ENCODE measurements at regions of chr7 and their contacts with region 1.

Region 1: DNA sequence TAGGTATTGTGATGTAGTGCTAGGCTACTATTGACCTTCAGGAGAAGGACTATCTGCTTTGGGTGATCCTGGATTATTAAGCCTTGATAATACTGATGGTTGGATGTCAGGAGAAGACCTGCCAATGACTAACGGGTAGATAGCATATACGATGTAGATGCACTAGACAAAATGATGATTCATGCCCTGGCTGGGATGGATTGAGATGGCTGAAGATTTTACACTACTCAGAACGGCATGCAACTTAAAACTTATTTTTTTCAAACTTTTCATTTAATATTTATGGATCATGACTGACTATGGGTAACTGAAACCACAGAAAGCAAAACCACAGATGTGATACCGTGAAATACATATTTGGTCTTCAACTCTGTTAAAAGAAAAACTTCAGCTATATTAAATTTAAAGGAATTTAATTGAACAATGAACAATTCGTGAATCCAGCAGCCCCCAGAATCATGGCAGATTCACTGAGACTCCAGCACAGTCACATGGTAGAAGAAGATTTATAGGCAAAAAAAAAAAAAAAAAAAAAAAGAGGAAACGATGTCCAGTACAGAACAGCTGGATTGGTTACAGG is 124.6 kb upstream of the CDK13 start:
- DNase-seq: no peak
- ATAC-seq: no peak
- H3K4me3 ChIP-seq: no peak overlapping the region
- H3K27ac ChIP-seq: no peak overlapping the region
- H3K4me1 ChIP-seq: no peaks in the 10 kb centered on the region
- H3K27me3 ChIP-seq: peaks cover 0 to 10% (median 0%) of the 10 kb centered on the region in 9 donors
- CTCF ChIP-seq: no peak
- POLR2A ChIP-seq: no peak

Region 2: DNA sequence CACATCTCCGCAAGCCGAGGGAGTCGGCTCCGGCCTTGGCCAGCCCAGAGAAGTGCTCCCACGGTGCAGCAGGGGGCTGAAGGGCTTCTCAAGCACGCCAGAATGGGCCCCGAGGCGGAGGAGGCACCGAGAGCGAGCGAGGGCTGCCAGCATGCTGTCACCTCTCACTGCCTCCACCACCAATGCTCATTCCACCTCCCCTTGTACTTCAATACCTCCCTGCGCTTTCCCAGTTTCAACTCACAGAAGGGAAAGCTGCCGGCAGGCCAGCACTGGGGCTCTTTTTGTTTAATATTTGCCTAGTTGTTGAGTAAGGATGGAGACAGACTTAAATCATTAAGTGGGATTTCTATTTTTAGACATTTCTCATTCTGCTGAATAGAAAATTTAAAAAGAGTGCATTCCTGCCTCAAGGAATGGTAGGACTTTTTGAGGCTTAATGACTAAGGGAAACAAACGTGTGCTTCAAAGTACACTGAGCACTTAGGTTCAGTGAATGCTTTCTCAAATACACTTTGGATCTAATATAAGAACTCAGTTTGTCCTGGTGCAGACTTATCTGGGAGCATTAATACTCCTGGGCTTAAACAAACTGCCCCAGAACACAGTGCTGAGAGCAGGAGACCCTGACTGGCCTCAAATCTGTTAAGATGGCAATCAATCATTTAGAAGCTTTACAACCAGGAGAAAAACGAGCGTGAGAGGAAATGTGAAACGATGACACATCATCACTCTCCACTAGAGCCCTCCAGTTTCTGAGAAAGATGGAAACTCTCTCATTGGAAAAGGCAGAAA is 71.0 kb before region 1 on chr7:
- intact Hi-C with region 1: loop called in 1 of 10 experiments (anchors 10 kb)
- DNase-seq: no peak
- ATAC-seq: no peak
- H3K4me3 ChIP-seq: no peak overlapping the region
- H3K27ac ChIP-seq: no peak overlapping the region
- H3K4me1 ChIP-seq: peaks cover 0 to 11% (median 1%) of the 10 kb centered on the region in 12 donors
- H3K27me3 ChIP-seq: no peaks in the 10 kb centered on the region
- CTCF ChIP-seq: no peak
- POLR2A ChIP-seq: no peak

Measured in heart left ventricle (tissue), 16 donors.